Caco-2 (cell line): ENCODE measurements at regions of chr11 and their contacts with region 1.

Region 1: DNA sequence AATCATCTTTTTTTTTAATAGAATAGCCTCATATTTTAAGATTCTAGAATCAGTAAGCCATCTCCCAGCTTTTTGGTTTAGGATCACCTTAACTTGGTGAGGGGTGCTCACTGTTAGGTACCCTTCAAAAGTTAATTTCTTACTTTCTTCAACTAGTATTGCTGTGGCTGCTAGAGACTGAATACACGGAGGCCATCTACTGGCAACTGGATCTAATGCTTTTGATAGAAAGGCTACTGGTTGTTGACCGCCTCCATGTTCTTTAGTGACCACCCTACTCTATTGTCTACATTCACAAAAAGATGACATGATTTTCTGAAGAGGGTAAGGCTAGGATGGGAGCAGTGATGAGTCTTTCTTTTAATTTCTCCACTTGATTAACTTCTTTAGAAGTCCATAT is 16.7 kb upstream of the ALDH3B2 start:
- DNase-seq: peak in 1 of 2 experiments; percentile 38
- H3K4me3 ChIP-seq: no peak overlapping the region
- H3K4me3 Mint-ChIP-seq: no peak overlapping the region
- H3K27ac Mint-ChIP-seq: no peak overlapping the region
- H3K4me1 ChIP-seq: 0 out of 2 replicates have a peak, but pooled peaks cover 4% of the 10 kb centered on the region
- H3K4me1 Mint-ChIP-seq: no peaks in the 10 kb centered on the region
- H3K27me3 ChIP-seq: no peaks in the 10 kb centered on the region
- H3K27me3 Mint-ChIP-seq: no peaks in the 10 kb centered on the region
- CTCF ChIP-seq: peak; percentile 51 to 56

Region 2: GRCh38 chr11:66950113-66950535 is 741.0 kb before region 1 on chr11:
- CTCF ChIA-PET with region 1: no interaction called
- POLR2A ChIA-PET with region 1: interaction called, 11 read pairs
- intact Hi-C with region 1: no loop called
- DNase-seq: peak; percentile 94 to 96
- H3K4me3 ChIP-seq: no peak overlapping the region
- H3K4me3 Mint-ChIP-seq: no peak overlapping the region
- H3K27ac Mint-ChIP-seq: peak overlapping the region; percentile 89
- H3K4me1 ChIP-seq: peaks cover 16% of the 10 kb centered on the region
- H3K4me1 Mint-ChIP-seq: peaks cover 17% of the 10 kb centered on the region
- H3K27me3 ChIP-seq: no peaks in the 10 kb centered on the region
- H3K27me3 Mint-ChIP-seq: no peaks in the 10 kb centered on the region
- CTCF ChIP-seq: no peak

Region 3: DNA sequence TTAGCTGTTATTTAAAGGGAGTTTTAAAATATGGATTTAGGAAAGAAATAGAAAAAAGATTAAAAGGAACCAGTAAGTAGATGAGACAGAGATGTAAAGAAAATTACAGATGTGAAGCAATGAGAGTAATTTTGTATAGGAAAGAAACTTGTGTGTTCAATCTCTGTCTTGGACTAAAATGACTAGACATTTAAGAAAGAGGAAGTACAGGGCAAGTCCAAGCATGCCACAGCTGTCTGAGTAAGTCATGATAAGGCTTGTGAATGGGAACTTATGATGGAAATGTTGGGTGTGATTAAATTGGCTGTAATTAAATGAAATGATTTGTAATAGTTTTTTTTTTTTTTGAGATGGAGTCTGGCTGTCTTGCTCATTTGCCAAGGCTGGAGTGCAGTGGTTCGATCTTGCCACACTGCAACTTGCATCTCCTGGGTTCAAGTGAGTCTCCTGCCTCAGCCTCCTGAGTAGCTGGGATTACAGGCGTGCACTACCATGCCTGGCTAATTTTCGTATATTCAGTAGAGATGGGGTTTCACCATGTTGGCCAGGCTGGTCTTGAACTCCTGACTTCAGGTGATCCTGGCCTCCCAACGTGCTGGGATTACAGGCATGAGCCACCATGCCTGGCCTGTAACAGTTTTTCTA is 34.7 kb before region 1 on chr11:
- CTCF ChIA-PET with region 1: interaction called, 10 read pairs
- POLR2A ChIA-PET with region 1: no interaction called
- intact Hi-C with region 1: no loop called
- DNase-seq: peak in 1 of 2 experiments; percentile 8
- H3K4me3 ChIP-seq: no peak overlapping the region
- H3K4me3 Mint-ChIP-seq: no peak overlapping the region
- H3K27ac Mint-ChIP-seq: no peak overlapping the region
- H3K4me1 ChIP-seq: no peaks in the 10 kb centered on the region
- H3K4me1 Mint-ChIP-seq: peaks cover 8% of the 10 kb centered on the region
- H3K27me3 ChIP-seq: no peaks in the 10 kb centered on the region
- H3K27me3 Mint-ChIP-seq: no peaks in the 10 kb centered on the region
- CTCF ChIP-seq: no peak

Region 4: GRCh38 chr11:67665541-67666362 is 25.4 kb before region 1 on chr11:
- CTCF ChIA-PET with region 1: interaction called, 5 read pairs
- POLR2A ChIA-PET with region 1: no interaction called
- intact Hi-C with region 1: loop called (anchors 1 kb)
- DNase-seq: peak; percentile 74 to 80
- H3K4me3 ChIP-seq: no peak overlapping the region
- H3K4me3 Mint-ChIP-seq: no peak overlapping the region
- H3K27ac Mint-ChIP-seq: no peak overlapping the region
- H3K4me1 ChIP-seq: no peaks in the 10 kb centered on the region
- H3K4me1 Mint-ChIP-seq: no peaks in the 10 kb centered on the region
- H3K27me3 ChIP-seq: no peaks in the 10 kb centered on the region
- H3K27me3 Mint-ChIP-seq: no peaks in the 10 kb centered on the region
- CTCF ChIP-seq: peak; percentile 68 to 77

Region 5: DNA sequence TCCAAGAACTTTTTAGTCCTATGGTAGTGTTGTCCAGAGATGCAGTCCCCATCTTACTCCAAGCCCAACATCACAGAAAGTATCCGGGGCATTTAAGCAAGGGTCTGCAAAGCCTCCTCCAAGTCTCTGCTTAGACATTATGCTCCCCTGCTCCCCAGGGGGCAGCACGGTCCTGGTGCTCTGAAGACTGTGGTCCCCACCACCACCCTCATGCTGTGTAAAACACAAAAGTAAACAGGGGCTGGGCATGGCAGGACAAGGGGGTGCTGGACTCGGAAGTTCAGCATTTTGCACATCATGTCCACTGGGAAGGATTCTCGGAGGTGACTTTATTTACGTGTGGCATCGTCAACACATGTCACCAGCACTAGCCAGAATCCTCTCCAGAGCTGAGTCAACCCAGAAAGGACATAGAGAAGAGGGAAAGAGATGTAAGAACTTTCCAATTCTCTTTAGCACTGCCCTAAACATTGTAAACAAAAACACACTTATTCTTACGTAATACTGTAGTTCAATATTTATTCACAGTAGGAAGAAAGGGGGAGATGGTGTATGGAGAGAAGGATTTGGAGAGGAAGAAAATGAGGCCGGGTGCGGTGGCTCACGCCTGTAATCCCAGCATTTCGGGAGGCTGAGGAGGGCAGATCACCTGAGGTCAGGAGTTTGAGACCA is 385.4 kb after region 1 on chr11:
- CTCF ChIA-PET with region 1: no interaction called
- POLR2A ChIA-PET with region 1: no interaction called
- intact Hi-C with region 1: no loop called
- DNase-seq: peak in 1 of 2 experiments; percentile 51
- H3K4me3 ChIP-seq: no peak overlapping the region
- H3K4me3 Mint-ChIP-seq: no peak overlapping the region
- H3K27ac Mint-ChIP-seq: no peak overlapping the region
- H3K4me1 ChIP-seq: no peaks in the 10 kb centered on the region
- H3K4me1 Mint-ChIP-seq: no peaks in the 10 kb centered on the region
- H3K27me3 ChIP-seq: no peaks in the 10 kb centered on the region
- H3K27me3 Mint-ChIP-seq: no peaks in the 10 kb centered on the region
- CTCF ChIP-seq: peak; percentile 42 to 75